Upper lobe of right lung (tissue), 1 donor: ENCODE measurements at regions of chr12 and their contacts with region 1.

Region 1: DNA sequence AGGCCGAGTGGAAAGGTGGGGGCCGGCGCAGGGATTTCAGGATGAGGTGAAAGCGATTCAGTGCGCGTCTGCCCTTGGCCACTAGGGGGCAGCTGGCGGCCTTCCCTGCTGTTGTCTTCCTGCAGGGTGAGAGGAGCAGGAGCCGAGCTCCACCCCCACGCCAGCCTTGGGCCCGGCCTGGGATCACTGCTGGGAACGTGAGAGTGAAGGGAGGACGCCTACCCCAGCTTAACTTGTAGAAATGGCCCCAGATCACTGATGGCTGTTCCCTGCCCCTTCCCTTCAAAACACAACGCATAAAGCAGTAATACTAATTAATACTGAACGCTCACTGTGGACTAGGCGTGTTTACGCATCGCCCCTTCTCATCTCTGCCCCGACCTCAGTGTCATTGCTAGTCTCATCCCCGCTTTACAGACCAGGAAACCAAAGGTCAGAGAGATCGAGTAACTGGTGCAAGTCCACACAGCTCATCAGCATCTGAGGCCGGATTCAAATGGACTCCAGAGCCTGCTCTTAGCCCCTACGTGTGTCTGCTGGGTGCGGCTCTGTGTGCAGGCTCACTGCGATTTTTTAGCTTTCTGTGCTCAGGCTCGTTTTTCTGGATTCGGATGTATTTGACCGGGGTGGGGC is 24.3 kb downstream of the MVK start:
- DNase-seq: peak; percentile 92
- ATAC-seq: peak; percentile 95
- H3K4me3 ChIP-seq: no peak overlapping the region
- H3K27ac ChIP-seq: no peak overlapping the region
- H3K4me1 ChIP-seq: peaks cover 6% of the 10 kb centered on the region
- H3K27me3 ChIP-seq: no peaks in the 10 kb centered on the region
- CTCF ChIP-seq: peak; percentile 97

Region 2: GRCh38 chr12:109637348-109637747 is 39.4 kb after region 1 on chr12:
- intact Hi-C with region 1: no loop called
- DNase-seq: no peak
- ATAC-seq: no peak
- H3K4me3 ChIP-seq: no peak overlapping the region
- H3K27ac ChIP-seq: no peak overlapping the region
- H3K4me1 ChIP-seq: no peaks in the 10 kb centered on the region
- H3K27me3 ChIP-seq: peaks cover 12% of the 10 kb centered on the region
- CTCF ChIP-seq: no peak

Region 3: GRCh38 chr12:109775172-109775881 is 177.4 kb after region 1 on chr12:
- intact Hi-C with region 1: loop called (anchors 5 kb)
- DNase-seq: peak; percentile 88
- ATAC-seq: peak; percentile 90
- H3K4me3 ChIP-seq: no peak overlapping the region
- H3K27ac ChIP-seq: no peak overlapping the region
- H3K4me1 ChIP-seq: no peaks in the 10 kb centered on the region
- H3K27me3 ChIP-seq: no peaks in the 10 kb centered on the region
- CTCF ChIP-seq: peak; percentile 87